H1 (cell line): ENCODE measurements at regions of chr19 and their contacts with region 1.

Region 1: DNA sequence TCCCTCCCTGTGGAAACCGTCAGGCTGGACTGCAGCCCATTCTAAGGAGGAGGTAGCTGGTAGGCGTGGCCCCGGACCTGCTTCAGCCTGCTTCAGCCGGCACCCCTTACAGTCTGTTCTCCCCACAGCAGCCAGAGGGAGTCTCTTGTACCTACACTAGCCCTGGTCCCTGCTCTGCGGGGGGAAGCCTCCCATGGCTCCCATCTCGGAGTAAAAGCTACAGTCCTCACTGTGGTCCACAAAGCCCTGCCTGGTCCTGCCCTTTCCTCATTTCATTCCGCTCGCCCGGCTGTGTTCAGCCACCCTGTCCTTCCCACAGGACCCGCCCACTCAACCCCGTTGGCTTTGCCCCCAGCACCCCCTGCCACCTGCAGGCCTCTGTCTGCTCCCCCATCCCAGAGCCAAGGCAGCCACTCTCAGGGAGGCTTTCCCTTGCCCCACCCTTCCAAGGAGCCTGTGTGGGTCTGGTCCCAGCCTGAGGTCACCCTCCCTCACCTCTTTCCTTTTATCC is 1.3 kb downstream of the PGLYRP1 start:
- DNase-seq: no peak
- H3K4me3 ChIP-seq: no peak overlapping the region
- H3K27ac ChIP-seq: no peak overlapping the region
- H3K4me1 ChIP-seq: peaks cover 0 to 14% (median 8%) of the 10 kb centered on the region in 4 experiments; a peak in 6 of 7 replicates
- H3K27me3 ChIP-seq: peaks cover 0 to 2% (median 0%) of the 10 kb centered on the region in 4 experiments; a peak in 2 of 7 replicates
- CTCF ChIP-seq: peak; percentile 20 to 43 (median 39)
- EP300 ChIP-seq: no peak
- POLR2A ChIP-seq: no peak
- RAD21 ChIP-seq: no peak

Region 2: GRCh38 chr19:46040952-46041500 is 19.4 kb after region 1 on chr19 and contains the start of gene IGFL4:
- CTCF ChIA-PET with region 1: interaction called, 34 read pairs
- POLR2A ChIA-PET with region 1: interaction called, 3 read pairs
- DNase-seq: no peak
- H3K4me3 ChIP-seq: no peak within 1 kb of the TSS
- H3K27ac ChIP-seq: no peak within 1 kb of the TSS
- H3K4me1 ChIP-seq: no peaks in the 10 kb centered on the region
- H3K27me3 ChIP-seq: peaks cover 0 to 2% (median 2%) of the 10 kb centered on the region in 4 experiments; a peak in 5 of 7 replicates
- CTCF ChIP-seq: no peak
- EP300 ChIP-seq: no peak
- POLR2A ChIP-seq: no peak
- RAD21 ChIP-seq: no peak
- total RNA-seq, gene IGFL4: 0.11 TPM in 1 of 2 replicates, not detected in the other